ENCODE measurements at regions of chr9 and their contacts with region 1.

Region 1: DNA sequence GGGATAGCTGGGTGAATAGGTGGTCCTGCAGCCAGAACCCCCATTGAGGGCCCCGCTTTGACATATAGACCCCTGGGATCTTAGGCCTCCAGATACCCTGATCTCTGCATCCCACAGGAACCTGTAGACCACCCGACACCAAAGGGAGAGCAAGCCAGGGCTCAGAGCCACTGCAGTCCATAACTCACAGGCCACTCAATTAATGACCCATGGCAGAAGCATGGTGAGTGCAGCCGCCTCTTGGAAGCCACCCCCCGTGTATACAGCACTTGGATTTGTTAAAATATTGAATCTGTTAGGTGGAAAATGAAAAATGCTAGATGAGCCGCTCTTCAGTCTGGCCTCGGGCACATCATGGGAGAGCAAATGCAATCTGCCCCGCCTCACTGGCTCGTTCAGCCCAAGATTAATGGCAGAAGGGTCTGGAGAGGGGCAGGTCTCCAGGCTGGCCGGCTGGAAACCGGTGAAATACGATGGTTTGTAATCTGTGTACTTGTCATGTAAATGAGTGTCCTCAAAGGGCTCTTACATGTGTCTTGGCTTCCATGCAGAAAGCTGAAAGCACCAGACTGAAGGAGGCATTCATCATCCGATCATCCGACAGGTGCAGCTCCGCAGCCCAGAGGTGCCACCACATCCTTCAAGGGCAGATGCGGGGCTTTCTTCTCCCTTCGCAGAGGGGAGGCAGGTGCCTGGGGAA is 111.3 kb downstream of the OLFM1 start:
- DNase-seq: no peak
- ATAC-seq: no peak

Region 2: GRCh38 chr9:135154050-135154615 is 44.6 kb before region 1 on chr9:
- intact Hi-C with region 1: loop called (anchors 2 kb)
- DNase-seq: no peak
- ATAC-seq: no peak

Region 3: GRCh38 chr9:135273008-135273407 is 74.3 kb after region 1 on chr9:
- intact Hi-C with region 1: loop called (anchors 5 kb)
- DNase-seq: no peak
- ATAC-seq: no peak

Measured in sciatic nerve (tissue), 2 donors.